Activated CD8-positive, alpha-beta T cell treated with anti-CD3 and anti-CD28 coated beads for 36 hours (primary cell): ENCODE measurements at regions of chr20 and their contacts with region 1.

Region 1: DNA sequence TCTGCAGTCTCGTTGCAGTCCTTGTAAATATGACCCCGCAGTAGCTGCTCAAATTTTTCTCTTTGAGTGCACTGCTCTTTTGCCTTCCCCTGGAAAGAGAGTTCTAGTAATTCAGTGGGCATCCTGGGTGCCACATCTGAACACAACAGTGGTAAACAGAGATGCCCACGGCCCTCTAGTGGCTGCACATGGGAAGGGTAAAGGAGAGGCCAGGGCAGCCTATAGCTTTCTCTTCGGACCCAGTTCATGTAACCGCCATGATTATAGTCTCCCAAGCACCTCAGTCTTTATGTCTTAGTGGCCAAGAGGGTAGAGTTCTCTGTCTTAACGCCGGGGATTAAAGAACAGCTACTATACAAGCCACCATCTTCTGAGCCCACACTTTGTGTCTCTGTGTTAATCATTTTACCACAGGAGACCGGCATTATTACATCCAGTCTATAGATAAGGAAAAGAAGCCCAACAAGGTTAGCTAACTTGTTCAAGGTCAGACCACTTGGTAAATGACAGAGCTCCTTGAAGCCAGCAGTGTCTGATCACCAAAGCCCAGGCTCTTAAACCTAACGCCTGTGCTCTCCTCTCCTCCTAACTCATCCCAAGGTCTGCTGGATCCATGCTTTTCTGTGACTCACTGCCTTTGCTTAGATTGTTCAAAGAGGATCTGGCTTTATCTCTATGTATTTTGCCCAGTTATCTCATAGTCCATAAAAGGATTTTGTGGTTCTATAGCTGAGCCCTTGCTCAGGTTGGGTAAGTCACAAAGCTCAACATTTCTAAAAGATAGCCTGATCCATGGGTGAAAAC is 81.8 kb downstream of the ISM1 start:
- DNase-seq: peak; percentile 69
- ATAC-seq: peak; percentile 90
- H3K4me3 Mint-ChIP-seq: no peak overlapping the region
- H3K27ac Mint-ChIP-seq: no peak overlapping the region
- H3K4me1 Mint-ChIP-seq: no peaks in the 10 kb centered on the region
- H3K27me3 Mint-ChIP-seq: peaks cover 4% of the 10 kb centered on the region
- CTCF ChIP-seq: peak; percentile 64

Region 2: DNA sequence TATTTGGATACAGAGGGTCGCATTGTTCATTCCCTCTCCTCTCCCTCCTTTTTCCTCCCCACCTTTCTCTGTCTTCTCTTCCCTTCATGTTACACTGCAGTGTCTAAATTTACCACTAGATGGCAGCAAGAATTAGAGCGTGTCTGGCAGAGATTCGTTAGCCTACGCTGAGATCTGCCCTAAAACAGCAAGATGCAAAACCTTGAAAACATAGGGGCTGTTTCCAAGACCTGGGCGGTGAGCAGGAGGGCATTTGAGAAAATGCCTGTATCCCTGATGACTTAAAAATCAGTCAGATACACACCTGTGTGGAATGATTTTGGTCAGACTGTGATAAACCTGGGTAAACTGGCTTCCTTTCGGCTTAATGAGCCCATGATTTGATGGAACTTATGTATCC is 183.3 kb before region 1 on chr20:
- CTCF ChIA-PET with region 1: interaction called, 53 read pairs
- POLR2A ChIA-PET with region 1: no interaction called
- intact Hi-C with region 1: loop called (anchors 2 kb)
- DNase-seq: peak; percentile 31
- ATAC-seq: peak; percentile 83
- H3K4me3 Mint-ChIP-seq: no peak overlapping the region
- H3K27ac Mint-ChIP-seq: no peak overlapping the region
- H3K4me1 Mint-ChIP-seq: no peaks in the 10 kb centered on the region
- H3K27me3 Mint-ChIP-seq: peaks cover 1% of the 10 kb centered on the region
- CTCF ChIP-seq: peak; percentile 94

Region 3: GRCh38 chr20:13221673-13222318 is 81.1 kb before region 1 on chr20:
- CTCF ChIA-PET with region 1: no interaction called
- POLR2A ChIA-PET with region 1: no interaction called
- intact Hi-C with region 1: loop called (anchors 10 kb)
- DNase-seq: peak; percentile 77
- ATAC-seq: peak; percentile 83
- H3K4me3 Mint-ChIP-seq: peak overlapping the region; percentile 76
- H3K27ac Mint-ChIP-seq: peak overlapping the region; percentile 36
- H3K4me1 Mint-ChIP-seq: peaks cover 16% of the 10 kb centered on the region
- H3K27me3 Mint-ChIP-seq: peaks cover 45% of the 10 kb centered on the region
- CTCF ChIP-seq: no peak

Region 4: GRCh38 chr20:13325033-13325432 is 22.2 kb after region 1 on chr20:
- CTCF ChIA-PET with region 1: interaction called, 12 read pairs
- POLR2A ChIA-PET with region 1: no interaction called
- intact Hi-C with region 1: no loop called
- DNase-seq: peak; percentile 52
- ATAC-seq: peak; percentile 45
- H3K4me3 Mint-ChIP-seq: no peak overlapping the region
- H3K27ac Mint-ChIP-seq: no peak overlapping the region
- H3K4me1 Mint-ChIP-seq: peaks cover 10% of the 10 kb centered on the region
- H3K27me3 Mint-ChIP-seq: peaks cover 20% of the 10 kb centered on the region
- CTCF ChIP-seq: peak; percentile 40

Region 5: DNA sequence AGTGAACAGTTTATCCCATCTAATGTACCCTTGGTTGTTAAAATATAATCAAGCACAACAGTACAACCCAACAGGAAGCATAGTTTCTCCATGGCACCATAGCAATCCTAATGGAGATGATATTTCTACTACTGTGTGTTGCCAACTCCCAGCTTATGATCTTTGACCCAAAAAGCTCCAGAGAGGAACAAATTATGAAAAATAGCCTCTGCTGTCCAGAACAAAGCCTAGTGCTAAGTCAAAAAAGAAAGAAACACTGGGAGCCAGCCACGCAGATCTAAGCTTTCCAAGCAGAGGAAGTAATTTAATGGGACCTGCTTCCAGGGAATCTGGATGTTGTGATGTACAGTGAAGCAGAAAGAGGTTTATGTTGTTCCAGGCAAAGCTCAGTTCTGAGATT is 388.1 kb after region 1 on chr20:
- CTCF ChIA-PET with region 1: no interaction called
- POLR2A ChIA-PET with region 1: no interaction called
- intact Hi-C with region 1: no loop called
- DNase-seq: no peak
- ATAC-seq: no peak
- H3K4me3 Mint-ChIP-seq: no peak overlapping the region
- H3K27ac Mint-ChIP-seq: no peak overlapping the region
- H3K4me1 Mint-ChIP-seq: no peaks in the 10 kb centered on the region
- H3K27me3 Mint-ChIP-seq: peaks cover 3% of the 10 kb centered on the region
- CTCF ChIP-seq: no peak